Dorsolateral prefrontal cortex (tissue), 120 donors: ENCODE measurements at regions of chr6 and their contacts with region 1.

Region 1: DNA sequence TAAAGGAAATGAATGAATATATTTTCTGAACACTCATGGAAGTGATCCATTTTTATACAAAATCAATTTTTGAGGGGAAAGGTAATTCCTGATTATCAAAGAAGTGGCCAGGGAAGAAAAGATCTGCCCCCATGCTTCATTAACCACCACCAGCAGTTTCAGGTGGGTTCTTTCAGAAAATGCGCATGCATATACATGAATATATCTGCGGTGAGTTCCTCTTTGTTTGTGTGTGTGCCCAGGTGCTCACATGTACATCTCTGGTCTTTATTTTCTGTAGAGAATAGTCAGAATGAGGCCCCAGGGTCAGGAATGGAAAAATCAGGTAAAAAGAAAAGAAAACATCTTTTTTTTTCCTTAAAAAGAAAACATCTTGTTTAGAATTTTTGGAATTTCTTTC is 88.4 kb downstream of the SGK1 start:
- DNase-seq: no peak
- H3K4me3 ChIP-seq: peak overlapping the region in 17 of 59 donors; percentile 2 to 48 (median 30)
- H3K27ac ChIP-seq: peak overlapping the region in 40 of 59 donors; percentile 3 to 76 (median 56)
- H3K27me3 ChIP-seq: no peaks in the 10 kb centered on the region
- CTCF ChIP-seq: no peak

Region 2: GRCh38 chr6:134190883-134191282 is 38.6 kb before region 1 on chr6:
- intact Hi-C with region 1: loop called in 1 of 2 experiments (anchors 5 kb)
- DNase-seq: no peak
- H3K4me3 ChIP-seq: no peak overlapping the region
- H3K27ac ChIP-seq: peak overlapping the region in 13 of 59 donors; percentile 8 to 45 (median 19)
- H3K27me3 ChIP-seq: no peaks in the 10 kb centered on the region
- CTCF ChIP-seq: no peak

Region 3: DNA sequence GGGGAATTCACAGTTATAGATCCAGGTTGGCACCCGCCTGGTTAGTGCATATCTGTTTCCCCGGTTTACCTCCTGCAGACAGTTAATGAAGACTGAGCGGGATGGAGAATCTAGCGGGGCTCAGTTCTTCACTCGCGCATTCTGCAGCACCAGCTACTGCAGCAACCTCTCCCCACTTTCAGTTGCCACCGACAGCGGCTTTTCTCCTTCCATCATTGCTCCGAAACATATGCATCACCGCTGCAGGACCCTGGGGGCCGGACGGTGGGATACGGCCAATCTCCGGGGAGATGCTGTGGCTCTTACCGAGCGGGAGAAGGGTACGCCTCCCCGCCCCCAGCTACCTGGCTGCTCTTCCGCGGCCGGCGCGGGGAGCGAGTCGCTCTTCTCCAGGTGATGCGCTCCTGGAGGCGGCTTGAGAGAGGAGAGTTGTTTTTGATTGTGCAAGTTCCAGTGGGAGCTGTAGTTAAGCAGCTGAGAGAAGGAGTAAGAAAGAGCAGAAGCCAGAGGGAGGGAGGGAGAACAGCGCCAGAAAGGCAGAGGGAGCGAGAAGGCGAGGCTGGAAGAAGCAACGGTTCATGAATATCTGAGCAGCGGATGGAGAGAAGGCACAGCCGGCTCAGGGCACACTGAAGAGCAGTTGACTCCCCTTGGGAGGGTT is 88.1 kb after region 1 on chr6 and contains the start of gene SGK1:
- intact Hi-C with region 1: no loop called
- DNase-seq: peak in 9 of 10 donors; percentile 41 to 70 (median 67)
- H3K4me3 ChIP-seq: peak within 1 kb of the TSS; percentile 57 to 95 (median 79)
- H3K27ac ChIP-seq: peak within 1 kb of the TSS; percentile 87 to 99 (median 96)
- H3K27me3 ChIP-seq: no peaks in the 10 kb centered on the region
- CTCF ChIP-seq: peak in 23 of 56 donors; percentile 5 to 45 (median 23)
- total RNA-seq, gene SGK1: 31.4 to 701 (median 120) TPM